ENCODE measurements at regions of chr10 and their contacts with region 1.

Region 1: DNA sequence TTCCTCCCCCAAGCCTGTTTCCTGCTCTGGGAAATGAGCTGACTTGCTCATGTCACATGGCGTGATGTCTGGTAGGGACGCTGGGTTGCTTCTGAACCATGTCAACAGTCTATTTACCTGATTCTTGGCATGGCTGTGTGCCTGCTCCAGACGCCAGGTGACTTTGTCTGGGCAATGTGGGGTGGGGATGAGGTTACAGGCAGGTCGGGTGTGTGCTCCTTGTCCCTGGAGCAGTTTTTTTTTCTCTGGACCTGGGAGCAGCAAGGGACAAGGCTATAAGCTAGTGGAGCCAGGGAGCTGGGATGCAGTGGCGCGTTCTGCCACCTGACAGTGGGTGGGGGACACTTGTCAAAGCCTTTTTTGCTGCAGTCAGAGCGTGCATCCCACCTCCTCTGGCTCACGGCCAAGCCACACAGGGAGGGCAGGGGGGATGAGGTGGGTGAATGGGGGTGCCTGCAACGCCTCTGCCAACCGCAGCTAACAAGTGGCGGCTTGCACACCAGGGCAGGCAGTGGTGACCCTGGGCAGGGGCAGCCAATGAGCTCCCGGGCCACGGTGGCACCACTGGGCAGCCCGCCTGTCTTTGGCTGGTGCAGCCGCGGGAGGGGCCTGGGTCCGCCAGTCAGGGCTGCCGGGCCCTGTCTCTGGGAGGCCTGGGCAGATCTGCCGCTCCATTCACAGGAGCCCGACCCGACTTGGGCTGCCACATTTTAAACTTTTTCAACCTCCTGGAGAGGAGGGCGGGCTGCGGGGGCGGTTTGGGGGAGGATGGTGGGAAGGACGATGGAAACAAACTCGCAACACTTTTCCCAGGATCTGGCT is 22.9 kb downstream of the DNAJB12 start:
- DNase-seq: peak; percentile 81
- H3K4me3 ChIP-seq: peak overlapping the region; percentile 17
- H3K27ac ChIP-seq: peak overlapping the region; percentile 95
- H3K4me1 ChIP-seq: peaks cover 98% of the 10 kb centered on the region
- H3K27me3 ChIP-seq: no peaks in the 10 kb centered on the region
- CTCF ChIP-seq: peak; percentile 53

Region 2: DNA sequence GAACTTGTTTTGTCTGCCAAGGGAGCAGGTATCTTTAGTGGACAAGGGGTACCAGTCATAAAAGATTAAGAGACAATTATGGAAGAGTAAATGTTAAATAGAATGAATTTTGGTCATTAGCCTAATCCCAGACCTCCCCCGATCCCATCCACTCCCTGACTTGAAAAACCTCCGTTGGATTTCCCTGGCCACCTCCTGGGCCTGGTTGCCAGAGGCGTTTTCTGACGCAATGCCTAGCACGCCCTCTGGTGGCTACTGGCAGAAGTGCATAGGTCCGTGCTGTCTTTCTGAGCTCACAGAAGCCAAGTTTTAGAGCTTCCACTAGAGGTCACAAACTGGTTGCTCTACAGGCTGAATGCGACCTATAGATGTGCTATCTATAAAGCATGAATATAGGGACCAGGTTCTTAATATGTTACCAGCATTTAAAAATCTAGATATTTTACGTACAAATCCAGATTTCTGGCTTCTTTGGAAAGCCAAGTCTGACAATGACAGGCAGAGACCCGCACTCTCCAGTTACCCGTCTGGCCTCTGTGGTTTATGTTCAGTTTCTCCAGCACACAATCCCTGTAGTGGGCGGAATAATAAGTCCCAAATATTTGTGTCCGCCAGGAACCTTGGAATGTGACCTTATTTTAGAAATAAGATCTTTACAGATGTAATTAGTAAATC is 283.2 kb before region 1 on chr10:
- intact Hi-C with region 1: loop called (anchors 5 kb)
- DNase-seq: peak; percentile 91
- H3K4me3 ChIP-seq: no peak overlapping the region
- H3K27ac ChIP-seq: no peak overlapping the region
- H3K4me1 ChIP-seq: peaks cover 22% of the 10 kb centered on the region
- H3K27me3 ChIP-seq: no peaks in the 10 kb centered on the region
- CTCF ChIP-seq: peak; percentile 99

Region 3: DNA sequence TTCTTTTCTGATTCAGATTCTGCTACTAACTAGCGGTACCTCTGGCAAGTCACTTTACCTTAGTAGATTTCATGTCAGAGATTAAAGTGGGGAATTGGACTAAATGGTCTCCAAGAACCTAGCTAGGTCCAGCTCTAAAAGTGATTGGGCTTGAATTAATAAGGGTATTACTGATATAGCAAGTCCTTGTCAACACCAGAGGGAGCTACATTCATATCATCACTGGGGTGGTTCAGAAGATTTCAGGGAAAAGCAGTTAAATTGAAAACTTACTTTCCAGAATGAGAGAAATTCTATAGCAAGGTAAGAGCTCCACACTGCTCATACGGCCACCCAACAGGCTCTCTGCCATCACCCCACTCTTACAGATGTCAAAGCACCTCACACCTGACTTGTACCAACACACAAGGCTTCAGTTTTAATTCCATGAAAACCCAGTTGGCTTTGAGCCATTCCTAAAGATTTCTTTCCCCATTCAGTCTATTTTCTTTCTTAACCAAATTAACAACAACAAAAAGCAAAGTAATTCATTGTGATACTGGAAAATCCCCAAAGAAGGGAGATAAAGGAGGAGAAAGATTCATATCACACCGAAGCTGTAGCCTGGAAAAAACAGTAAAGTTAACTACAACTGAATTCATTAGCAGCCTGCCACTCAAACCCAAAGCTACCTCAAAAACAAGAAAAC is 205.5 kb before region 1 on chr10:
- intact Hi-C with region 1: loop called (anchors 10 kb)
- DNase-seq: no peak
- H3K4me3 ChIP-seq: no peak overlapping the region
- H3K27ac ChIP-seq: no peak overlapping the region
- H3K4me1 ChIP-seq: peaks cover 35% of the 10 kb centered on the region
- H3K27me3 ChIP-seq: no peaks in the 10 kb centered on the region
- CTCF ChIP-seq: peak; percentile 55

Region 4: GRCh38 chr10:72248468-72249151 is 83.2 kb before region 1 on chr10:
- intact Hi-C with region 1: loop called (anchors 10 kb)
- DNase-seq: peak; percentile 88
- H3K4me3 ChIP-seq: peak overlapping the region; percentile 50
- H3K27ac ChIP-seq: peak overlapping the region; percentile 97
- H3K4me1 ChIP-seq: peaks cover 99% of the 10 kb centered on the region
- H3K27me3 ChIP-seq: no peaks in the 10 kb centered on the region
- CTCF ChIP-seq: no peak

Measured in left ventricle myocardium inferior (tissue), 1 donor.